Activated CD8-positive, alpha-beta T cell treated with anti-CD3 and anti-CD28 coated beads for 36 hours (primary cell): ENCODE measurements at regions of chr14 and their contacts with region 1.

Region 1: DNA sequence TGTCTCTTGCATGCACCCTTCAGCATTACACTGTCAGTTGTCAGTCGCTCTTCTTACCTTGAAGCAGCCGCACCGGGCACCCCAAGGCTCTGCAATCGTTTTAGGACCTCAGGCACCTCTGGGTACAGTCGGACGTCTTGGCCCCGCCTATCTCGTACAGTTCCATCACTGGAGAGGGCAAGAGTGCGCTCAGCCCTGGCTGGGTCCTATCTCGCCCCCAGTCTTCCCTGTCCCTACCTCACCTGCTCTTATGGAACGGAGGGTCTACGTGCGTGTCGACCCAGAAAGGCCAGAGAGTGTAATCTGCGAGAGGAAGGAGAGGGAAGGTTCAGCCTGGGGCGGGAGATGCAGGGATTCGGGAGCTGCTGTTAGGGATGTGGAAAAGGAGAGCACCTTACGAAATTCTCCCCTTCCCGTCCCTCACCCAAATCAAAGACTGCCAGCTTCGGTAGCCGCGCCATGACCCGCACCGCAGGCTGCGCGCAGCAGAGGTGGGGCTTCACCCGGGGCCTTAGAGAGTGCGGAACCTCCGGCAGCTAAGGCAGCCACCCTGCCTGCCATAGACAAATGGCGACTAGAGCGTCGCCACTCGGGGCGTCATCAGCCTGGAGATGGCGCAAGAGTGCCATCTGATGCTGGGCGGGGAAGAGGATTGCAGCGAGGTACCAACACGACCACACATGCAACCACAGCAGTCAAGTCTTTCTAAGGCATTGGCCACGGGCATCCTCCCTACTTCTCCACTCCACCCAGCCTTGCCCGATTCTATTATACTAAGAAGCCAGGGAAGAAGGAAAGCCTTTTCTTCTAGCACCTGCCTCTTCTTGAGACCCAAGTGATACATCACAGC is at the start of gene MDP1:
- DNase-seq: peak; percentile 91
- ATAC-seq: peak; percentile 74
- H3K4me3 Mint-ChIP-seq: peak within 1 kb of the TSS; percentile 97
- H3K27ac Mint-ChIP-seq: peak within 1 kb of the TSS; percentile 98
- H3K4me1 Mint-ChIP-seq: peaks cover 40% of the 10 kb centered on the region
- H3K27me3 Mint-ChIP-seq: no peaks in the 10 kb centered on the region
- CTCF ChIP-seq: peak; percentile 45
- total RNA-seq, gene MDP1: 11.2 to 11.3 TPM

Region 2: GRCh38 chr14:24188251-24189058 is 27.3 kb before region 1 on chr14 and contains the start of gene IPO4:
- CTCF ChIA-PET with region 1: interaction called, 3 read pairs
- POLR2A ChIA-PET with region 1: interaction called, 41 read pairs
- intact Hi-C with region 1: no loop called
- DNase-seq: peak; percentile 96
- ATAC-seq: peak; percentile 95
- H3K4me3 Mint-ChIP-seq: peak within 1 kb of the TSS; percentile 92
- H3K27ac Mint-ChIP-seq: peak within 1 kb of the TSS; percentile 85
- H3K4me1 Mint-ChIP-seq: peaks cover 41% of the 10 kb centered on the region
- H3K27me3 Mint-ChIP-seq: no peaks in the 10 kb centered on the region
- CTCF ChIP-seq: no peak
- total RNA-seq, gene IPO4: 98.4 to 102 TPM

Region 3: DNA sequence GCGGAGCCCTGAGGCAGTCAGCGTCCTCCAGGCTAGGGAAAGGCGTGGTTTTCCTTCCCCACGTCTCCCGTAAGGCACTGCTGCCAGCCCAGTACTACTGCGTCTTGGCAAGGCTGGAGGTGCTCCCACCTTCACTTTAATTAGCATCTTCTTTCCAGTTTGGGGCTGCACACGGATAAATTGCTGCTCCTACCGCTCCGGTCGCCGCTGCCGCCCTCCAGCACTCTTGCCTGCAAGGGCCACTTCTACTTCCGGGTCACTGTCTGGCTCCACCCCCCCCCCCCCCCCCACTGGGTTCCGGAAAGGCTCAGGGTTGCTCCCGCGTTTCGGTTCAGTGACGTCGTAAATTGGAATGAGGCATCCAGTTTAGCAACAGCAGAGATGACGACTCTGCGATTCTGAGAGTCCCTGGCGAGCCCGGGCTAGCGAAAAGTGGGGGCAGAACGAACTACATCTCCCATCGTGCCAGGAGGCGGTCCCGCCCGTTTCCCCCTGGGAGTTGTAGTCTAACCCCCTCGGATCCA is 16.5 kb after region 1 on chr14 and contains the start of gene NEDD8:
- CTCF ChIA-PET with region 1: interaction called, 8 read pairs
- POLR2A ChIA-PET with region 1: interaction called, 17 read pairs
- intact Hi-C with region 1: no loop called
- DNase-seq: peak; percentile 94
- ATAC-seq: peak; percentile 90
- H3K4me3 Mint-ChIP-seq: peak within 1 kb of the TSS; percentile 93
- H3K27ac Mint-ChIP-seq: peak within 1 kb of the TSS; percentile 96
- H3K4me1 Mint-ChIP-seq: peaks cover 40% of the 10 kb centered on the region
- H3K27me3 Mint-ChIP-seq: no peaks in the 10 kb centered on the region
- CTCF ChIP-seq: no peak
- total RNA-seq, gene NEDD8: 167 to 172 TPM